BJ (cell line): ENCODE measurements at regions of chr2 and their contacts with region 1.

Region 1: GRCh38 chr2:67840460-67841068 is 222.2 kb downstream of the C1D start:
- DNase-seq: no peak
- H3K4me3 ChIP-seq: no peak overlapping the region
- H3K27me3 ChIP-seq: no peaks in the 10 kb centered on the region
- CTCF ChIP-seq: peak; percentile 91

Region 2: DNA sequence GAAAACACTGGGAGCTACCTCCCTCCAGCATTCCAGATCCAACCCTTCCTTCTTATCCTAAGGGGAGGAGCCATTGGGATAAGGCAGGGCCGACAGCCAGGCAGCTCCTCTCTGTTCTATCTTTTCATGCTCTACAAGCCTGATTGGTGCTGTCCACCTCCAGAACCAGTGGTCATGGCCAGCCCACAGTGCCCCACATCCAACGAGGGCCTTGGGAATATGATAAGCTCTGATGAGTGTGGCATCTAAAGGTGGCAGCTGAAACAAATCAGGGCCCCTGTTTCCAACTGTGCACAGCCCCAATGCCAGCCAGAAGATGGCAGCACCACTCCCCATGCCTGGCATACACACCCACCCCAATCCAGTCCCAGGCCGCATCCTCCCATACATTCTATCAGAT is 107.0 kb before region 1 on chr2:
- CTCF ChIA-PET with region 1: interaction called, 45 read pairs
- POLR2A ChIA-PET with region 1: no interaction called
- DNase-seq: no peak
- H3K4me3 ChIP-seq: no peak overlapping the region
- H3K27me3 ChIP-seq: no peaks in the 10 kb centered on the region
- CTCF ChIP-seq: peak; percentile 58

Region 3: DNA sequence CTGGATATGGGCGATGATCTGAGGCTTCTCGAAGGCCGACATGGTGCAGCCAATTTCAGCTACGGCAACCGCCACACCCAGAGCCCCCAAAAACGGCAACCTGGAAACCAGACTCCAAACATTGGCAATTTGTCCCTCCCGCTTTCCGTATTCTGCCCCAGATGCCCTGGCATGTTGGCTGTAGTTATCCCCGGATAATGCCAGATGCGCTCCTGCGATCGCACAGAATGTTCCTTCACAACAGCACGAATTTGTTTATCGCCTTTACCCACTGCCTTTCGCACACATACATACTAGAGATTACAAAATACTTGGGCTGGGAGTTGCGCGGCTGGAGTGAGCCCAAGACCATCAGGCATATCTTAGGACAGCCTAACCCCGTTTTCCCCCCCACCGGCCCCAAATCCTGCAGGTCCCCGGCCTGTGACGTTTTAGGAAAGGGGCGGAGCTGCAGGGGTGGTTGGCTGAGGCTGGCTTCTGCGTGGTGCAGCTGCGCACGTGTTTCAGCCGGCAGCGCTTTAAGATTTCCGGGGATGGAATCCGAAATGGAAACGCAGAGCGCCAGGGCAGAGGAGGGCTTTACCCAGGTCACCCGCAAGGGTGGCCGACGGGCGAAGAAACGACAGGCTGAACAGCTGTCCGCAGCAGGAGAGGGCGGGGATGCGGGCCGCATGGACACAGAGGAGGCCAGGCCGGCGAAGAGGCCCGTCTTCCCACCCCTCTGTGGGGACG is 317.0 kb after region 1 on chr2 and contains the start of gene PNO1:
- CTCF ChIA-PET with region 1: no interaction called
- POLR2A ChIA-PET with region 1: no interaction called
- DNase-seq: peak; percentile 53
- H3K4me3 ChIP-seq: peak within 1 kb of the TSS; percentile 79
- H3K27me3 ChIP-seq: no peaks in the 10 kb centered on the region
- CTCF ChIP-seq: no peak
- polyA plus RNA-seq, gene PNO1: 8.1 and 12.0 TPM in 2 replicates